ENCODE measurements at regions of chr11 and their contacts with region 1.

Region 1: GRCh38 chr11:12331239-12331874 is 46.0 kb upstream of the PARVA start:
- DNase-seq: peak; percentile 90
- H3K4me3 Mint-ChIP-seq: no peak overlapping the region
- H3K27ac Mint-ChIP-seq: no peak overlapping the region
- H3K4me1 Mint-ChIP-seq: peaks cover 4% of the 10 kb centered on the region
- H3K27me3 Mint-ChIP-seq: no peaks in the 10 kb centered on the region
- CTCF ChIP-seq: peak; percentile 89

Region 2: GRCh38 chr11:11584446-11584810 is 746.9 kb before region 1 on chr11:
- CTCF ChIA-PET with region 1: no interaction called
- POLR2A ChIA-PET with region 1: no interaction called
- intact Hi-C with region 1: no loop called
- DNase-seq: peak; percentile 87
- H3K4me3 Mint-ChIP-seq: peak overlapping the region; percentile 20
- H3K27ac Mint-ChIP-seq: peak overlapping the region; percentile 1
- H3K4me1 Mint-ChIP-seq: peaks cover 40% of the 10 kb centered on the region
- H3K27me3 Mint-ChIP-seq: no peaks in the 10 kb centered on the region
- CTCF ChIP-seq: no peak

Region 3: DNA sequence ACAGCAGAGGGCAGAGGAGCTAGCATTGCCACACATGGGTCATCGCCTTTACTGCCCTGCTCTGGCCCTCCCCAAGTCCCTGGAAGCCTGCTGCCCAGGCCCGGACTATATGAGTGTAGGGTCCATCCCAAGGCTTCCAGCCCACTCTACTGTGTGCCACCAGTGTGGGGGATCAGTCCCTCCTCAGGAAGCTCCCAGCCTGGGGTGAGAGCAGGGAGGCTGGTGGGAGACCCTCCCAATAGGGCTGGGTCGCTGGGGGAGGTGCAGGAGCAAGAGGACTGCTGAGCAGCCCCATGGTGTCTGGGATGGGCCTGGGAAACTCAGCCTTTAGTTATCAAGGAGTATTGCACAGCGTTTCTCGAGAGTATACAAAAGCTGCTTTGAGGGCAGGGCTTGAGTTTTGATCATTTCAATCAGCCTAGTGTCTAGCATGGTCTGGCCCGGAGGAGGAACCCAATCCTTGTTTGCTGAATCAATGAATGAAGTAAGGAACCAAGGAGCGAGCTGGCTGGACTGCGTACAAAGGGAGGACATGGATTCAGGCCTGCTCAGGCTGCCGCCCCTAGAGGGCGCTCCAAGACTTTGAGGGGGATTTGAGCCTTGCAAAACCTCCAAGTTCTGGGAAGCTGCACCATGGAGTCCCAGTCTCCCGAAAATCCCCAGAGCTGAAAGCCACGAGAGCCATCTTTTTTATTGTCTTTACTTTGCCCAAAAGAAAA is 43.0 kb before region 1 on chr11:
- CTCF ChIA-PET with region 1: interaction called, 28 read pairs
- POLR2A ChIA-PET with region 1: no interaction called
- intact Hi-C with region 1: loop called (anchors 5 kb)
- DNase-seq: peak; percentile 91
- H3K4me3 Mint-ChIP-seq: peak overlapping the region; percentile 26
- H3K27ac Mint-ChIP-seq: peak overlapping the region; percentile 20
- H3K4me1 Mint-ChIP-seq: peaks cover 42% of the 10 kb centered on the region
- H3K27me3 Mint-ChIP-seq: no peaks in the 10 kb centered on the region
- CTCF ChIP-seq: peak; percentile 91

Region 4: GRCh38 chr11:12298610-12299009 is 32.7 kb before region 1 on chr11:
- CTCF ChIA-PET with region 1: no interaction called
- POLR2A ChIA-PET with region 1: no interaction called
- intact Hi-C with region 1: no loop called
- DNase-seq: no peak
- H3K4me3 Mint-ChIP-seq: no peak overlapping the region
- H3K27ac Mint-ChIP-seq: no peak overlapping the region
- H3K4me1 Mint-ChIP-seq: no peaks in the 10 kb centered on the region
- H3K27me3 Mint-ChIP-seq: no peaks in the 10 kb centered on the region
- CTCF ChIP-seq: no peak

Region 5: DNA sequence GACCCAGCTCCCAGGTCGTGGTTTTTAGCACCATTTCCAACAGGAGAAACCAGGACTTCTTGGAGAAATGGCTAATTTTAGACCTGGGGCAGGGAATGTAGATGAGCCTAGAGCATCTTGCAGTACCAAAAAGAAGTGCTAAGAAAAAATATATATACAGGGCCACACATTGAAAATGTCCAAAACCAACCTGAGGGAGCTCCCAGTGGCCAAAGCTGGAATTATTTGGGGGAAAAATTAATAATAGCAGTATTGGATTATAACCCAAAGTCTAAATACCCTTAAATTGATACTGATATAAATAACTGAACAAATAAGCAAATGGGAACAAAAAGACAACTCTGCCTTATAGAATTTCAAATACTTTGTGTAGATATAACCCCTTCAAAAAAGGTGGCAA is 154.0 kb after region 1 on chr11:
- CTCF ChIA-PET with region 1: interaction called, 9 read pairs
- POLR2A ChIA-PET with region 1: interaction called, 4 read pairs
- intact Hi-C with region 1: loop called (anchors 5 kb)
- DNase-seq: peak; percentile 16
- H3K4me3 Mint-ChIP-seq: no peak overlapping the region
- H3K27ac Mint-ChIP-seq: no peak overlapping the region
- H3K4me1 Mint-ChIP-seq: no peaks in the 10 kb centered on the region
- H3K27me3 Mint-ChIP-seq: no peaks in the 10 kb centered on the region
- CTCF ChIP-seq: peak; percentile 26

Region 6: GRCh38 chr11:12888525-12889158 is 557.3 kb after region 1 on chr11:
- CTCF ChIA-PET with region 1: interaction called, 44 read pairs
- POLR2A ChIA-PET with region 1: interaction called, 3 read pairs
- intact Hi-C with region 1: no loop called
- DNase-seq: peak; percentile 85
- H3K4me3 Mint-ChIP-seq: no peak overlapping the region
- H3K27ac Mint-ChIP-seq: peak overlapping the region; percentile 84
- H3K4me1 Mint-ChIP-seq: peaks cover 17% of the 10 kb centered on the region
- H3K27me3 Mint-ChIP-seq: no peaks in the 10 kb centered on the region
- CTCF ChIP-seq: peak; percentile 55

Region 7: DNA sequence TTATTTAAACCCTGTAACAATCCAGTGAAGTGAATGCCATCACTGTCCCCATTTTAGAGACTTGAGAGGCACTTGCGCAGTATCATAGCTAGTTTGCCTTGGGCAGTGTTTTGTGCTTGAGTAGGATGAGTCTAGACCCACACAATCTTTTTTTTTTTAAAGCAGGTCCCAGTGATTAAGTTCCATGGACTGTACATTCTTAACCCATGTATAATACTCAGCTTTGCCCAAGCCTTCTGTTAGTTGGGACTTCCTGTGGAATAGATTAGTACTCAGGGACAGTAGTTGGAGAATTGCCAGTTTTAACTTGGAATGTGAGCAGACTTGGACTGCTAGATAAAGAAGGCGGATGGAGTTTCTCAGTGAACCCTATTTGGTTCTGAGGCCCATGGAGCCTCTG is 569.1 kb after region 1 on chr11:
- CTCF ChIA-PET with region 1: interaction called, 28 read pairs
- POLR2A ChIA-PET with region 1: no interaction called
- intact Hi-C with region 1: no loop called
- DNase-seq: peak; percentile 52
- H3K4me3 Mint-ChIP-seq: no peak overlapping the region
- H3K27ac Mint-ChIP-seq: peak overlapping the region; percentile 36
- H3K4me1 Mint-ChIP-seq: peaks cover 23% of the 10 kb centered on the region
- H3K27me3 Mint-ChIP-seq: no peaks in the 10 kb centered on the region
- CTCF ChIP-seq: no peak